Mammary epithelial cell (primary cell): ENCODE measurements at regions of chr10 and their contacts with region 1.

Region 1: DNA sequence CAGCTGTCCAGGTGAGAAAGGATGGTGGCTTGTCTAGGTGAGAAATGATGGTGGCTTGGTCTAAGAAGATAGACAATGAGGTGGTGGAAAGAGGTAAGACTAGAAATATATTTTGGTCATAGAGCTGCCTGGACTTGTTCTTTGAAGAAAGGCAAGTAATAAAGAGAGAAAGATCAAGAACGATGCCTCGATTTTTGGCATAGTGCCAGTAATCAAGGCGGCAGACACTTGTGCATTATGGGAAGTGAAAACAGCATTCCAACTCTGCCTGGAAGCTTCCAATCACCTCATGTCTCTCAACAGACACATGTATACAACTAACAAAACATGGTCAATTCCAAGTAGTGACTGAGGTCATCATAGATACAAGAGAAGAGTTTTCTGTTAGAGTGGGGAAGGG is 423.8 kb upstream of the NRP1 start:
- DNase-seq: no peak
- H3K4me3 ChIP-seq: no peak overlapping the region
- H3K27ac ChIP-seq: no peak overlapping the region
- H3K4me1 ChIP-seq: no peaks in the 10 kb centered on the region
- H3K27me3 ChIP-seq: no peaks in the 10 kb centered on the region
- CTCF ChIP-seq: no peak

Region 2: DNA sequence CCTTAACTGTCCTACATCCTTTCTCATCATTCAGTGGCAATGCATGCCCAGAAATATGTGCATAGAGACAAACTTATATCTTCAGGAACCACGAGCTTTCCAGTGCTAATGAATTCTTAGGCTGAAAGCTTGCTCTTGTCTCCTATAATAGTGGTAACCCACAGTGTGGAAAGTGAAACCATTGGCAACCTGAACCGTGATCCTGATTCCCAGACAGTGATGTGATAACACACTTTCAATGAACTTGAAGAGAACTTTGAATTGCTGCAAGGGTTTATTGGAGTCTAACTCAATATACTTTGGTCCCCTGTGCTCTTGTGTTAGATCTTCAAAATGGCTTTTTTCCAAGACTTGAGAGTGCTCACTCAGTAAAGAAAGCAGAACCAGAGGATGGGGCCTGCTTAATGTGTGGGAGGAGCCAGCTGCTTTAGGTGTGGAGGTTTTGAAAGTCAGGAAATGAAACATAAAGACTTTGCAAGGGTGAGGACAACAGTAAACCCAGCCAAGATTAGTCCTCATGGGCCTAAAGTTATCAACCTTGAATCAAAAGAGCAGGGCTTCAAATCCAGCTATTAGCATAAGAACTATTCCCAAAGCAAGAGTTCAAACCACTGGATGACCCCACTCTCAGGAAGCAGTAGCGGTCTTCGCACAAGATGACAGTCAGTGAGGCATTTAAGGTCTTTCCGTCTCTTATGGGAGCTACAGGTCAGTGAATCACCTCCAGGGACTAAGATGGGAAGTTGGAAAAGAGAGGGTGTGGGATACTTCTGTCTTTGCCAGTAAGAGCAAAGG is 91.4 kb before region 1 on chr10:
- CTCF ChIA-PET with region 1: no interaction called
- dilution Hi-C with region 1: loop called (anchors 5 kb)
- in situ Hi-C with region 1: no loop called
- intact Hi-C with region 1: no loop called
- DNase-seq: no peak
- H3K4me3 ChIP-seq: no peak overlapping the region
- H3K27ac ChIP-seq: no peak overlapping the region
- H3K4me1 ChIP-seq: peaks cover 4% of the 10 kb centered on the region
- H3K27me3 ChIP-seq: no peaks in the 10 kb centered on the region
- CTCF ChIP-seq: no peak

Region 3: GRCh38 chr10:33799281-33799943 is 41.1 kb after region 1 on chr10:
- CTCF ChIA-PET with region 1: no interaction called
- dilution Hi-C with region 1: no loop called
- in situ Hi-C with region 1: no loop called
- intact Hi-C with region 1: no loop called
- DNase-seq: no peak
- H3K4me3 ChIP-seq: no peak overlapping the region
- H3K27ac ChIP-seq: no peak overlapping the region
- H3K4me1 ChIP-seq: no peaks in the 10 kb centered on the region
- H3K27me3 ChIP-seq: no peaks in the 10 kb centered on the region
- CTCF ChIP-seq: no peak